ENCODE measurements at regions of chr6 and their contacts with region 1.

Region 1: GRCh38 chr6:145814501-145815308 is at the start of gene FBXO30:
- DNase-seq: peak; percentile 95
- ATAC-seq: peak; percentile 97
- total RNA-seq, gene FBXO30: 14.4 TPM

Region 2: DNA sequence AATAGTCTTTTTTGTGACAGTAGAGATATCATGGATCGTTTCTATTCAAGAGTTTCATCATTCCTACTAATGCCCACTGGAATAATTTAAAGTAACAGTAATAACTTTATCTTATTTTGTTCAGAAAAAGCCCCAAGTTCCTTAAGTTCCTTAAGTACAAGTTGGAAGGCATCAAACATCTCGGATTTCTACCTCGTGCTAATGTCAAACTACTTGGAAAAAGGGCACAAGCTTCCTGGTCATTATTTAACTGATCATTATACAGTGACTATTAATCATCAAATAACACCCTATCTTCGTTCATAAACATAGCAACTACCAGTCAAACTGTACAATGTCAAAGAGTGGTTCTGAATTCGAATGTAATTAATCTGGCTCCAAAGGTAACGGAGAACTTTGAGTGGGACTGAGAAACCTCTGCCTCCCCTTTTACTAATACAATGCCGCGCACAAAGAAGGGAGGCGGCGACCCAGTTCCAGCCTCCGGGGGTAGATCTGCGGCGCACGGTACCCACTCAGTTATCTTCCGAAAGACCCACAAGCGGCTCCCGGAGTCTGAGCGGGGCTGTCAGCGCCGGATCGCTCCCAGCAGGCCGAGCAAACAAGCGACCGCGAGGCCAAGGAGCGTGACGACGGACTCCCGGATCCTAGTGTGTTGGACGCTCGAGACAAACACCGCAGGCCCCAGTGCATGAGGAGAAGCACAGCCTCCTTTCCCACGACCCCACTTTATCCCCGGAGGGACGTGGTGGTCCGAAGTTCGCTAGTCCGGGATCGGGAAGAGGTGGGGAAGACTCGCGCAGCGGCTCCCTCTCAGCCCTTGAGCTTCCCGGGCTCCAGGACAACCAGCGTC is 148.7 kb after region 1 on chr6:
- intact Hi-C with region 1: loop called (anchors 10 kb)
- DNase-seq: peak; percentile 67
- ATAC-seq: peak; percentile 60

Measured in left ventricle myocardium superior (tissue), 1 donor.